AG04449 (cell line): ENCODE measurements at regions of chr13 and their contacts with region 1.

Region 1: DNA sequence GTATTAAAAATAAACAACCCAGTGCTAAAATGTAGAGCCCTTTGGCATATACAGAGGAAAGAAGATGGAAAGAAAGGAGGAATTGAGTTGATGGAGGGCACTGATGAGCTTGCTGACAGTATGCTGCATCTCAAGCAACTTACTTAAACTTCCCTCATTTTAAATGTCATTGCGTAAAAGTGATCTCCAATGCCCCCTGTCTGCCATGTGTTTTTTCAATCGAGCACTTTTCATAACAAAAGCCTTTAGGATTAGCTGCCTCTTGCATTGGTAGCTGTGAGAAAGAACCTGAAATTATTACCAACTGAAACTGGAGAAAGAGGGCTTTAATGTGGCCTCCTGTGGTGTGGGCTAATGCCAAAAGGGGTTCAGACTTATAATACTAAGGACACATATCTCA is 541.6 kb downstream of the SUCLA2 start:
- DNase-seq: no peak
- H3K4me3 ChIP-seq: no peak overlapping the region
- CTCF ChIP-seq: peak; percentile 22

Region 2: GRCh38 chr13:46975173-46975572 is 484.3 kb before region 1 on chr13:
- CTCF ChIA-PET with region 1: interaction called, 24 read pairs
- POLR2A ChIA-PET with region 1: no interaction called
- DNase-seq: no peak
- H3K4me3 ChIP-seq: no peak overlapping the region
- CTCF ChIP-seq: no peak

Region 3: GRCh38 chr13:47437406-47437805 is 22.1 kb before region 1 on chr13:
- CTCF ChIA-PET with region 1: interaction called, 13 read pairs
- POLR2A ChIA-PET with region 1: no interaction called
- DNase-seq: peak; percentile 61
- H3K4me3 ChIP-seq: no peak overlapping the region
- CTCF ChIP-seq: no peak

Region 4: GRCh38 chr13:47480121-47480520 is 20.6 kb after region 1 on chr13:
- CTCF ChIA-PET with region 1: interaction called, 11 read pairs
- POLR2A ChIA-PET with region 1: no interaction called
- DNase-seq: peak; percentile 78
- H3K4me3 ChIP-seq: no peak overlapping the region
- CTCF ChIP-seq: no peak

Region 5: DNA sequence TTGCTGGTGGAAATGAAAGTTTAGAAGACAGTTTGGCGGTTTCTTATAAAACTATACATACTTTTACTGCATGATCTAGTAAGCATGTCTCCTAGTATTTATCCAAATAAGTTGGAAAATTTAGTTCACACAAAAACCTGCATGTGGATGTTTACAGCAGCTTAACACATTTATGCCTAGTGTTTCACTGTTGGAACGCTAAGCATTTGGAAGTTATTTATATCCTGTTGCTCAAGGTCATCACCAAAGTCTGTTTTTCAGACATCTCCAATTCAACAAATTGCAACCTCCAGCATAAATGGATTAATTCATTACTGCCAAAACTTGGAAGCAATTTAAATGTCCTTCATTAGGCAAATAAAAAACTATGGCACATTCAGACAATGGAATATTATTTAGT is 79.8 kb after region 1 on chr13:
- CTCF ChIA-PET with region 1: no interaction called
- POLR2A ChIA-PET with region 1: no interaction called
- DNase-seq: no peak
- H3K4me3 ChIP-seq: no peak overlapping the region
- CTCF ChIP-seq: no peak

Region 6: GRCh38 chr13:47588676-47589075 is 129.2 kb after region 1 on chr13:
- CTCF ChIA-PET with region 1: no interaction called
- POLR2A ChIA-PET with region 1: no interaction called
- DNase-seq: no peak
- H3K4me3 ChIP-seq: no peak overlapping the region
- CTCF ChIP-seq: no peak

Region 7: DNA sequence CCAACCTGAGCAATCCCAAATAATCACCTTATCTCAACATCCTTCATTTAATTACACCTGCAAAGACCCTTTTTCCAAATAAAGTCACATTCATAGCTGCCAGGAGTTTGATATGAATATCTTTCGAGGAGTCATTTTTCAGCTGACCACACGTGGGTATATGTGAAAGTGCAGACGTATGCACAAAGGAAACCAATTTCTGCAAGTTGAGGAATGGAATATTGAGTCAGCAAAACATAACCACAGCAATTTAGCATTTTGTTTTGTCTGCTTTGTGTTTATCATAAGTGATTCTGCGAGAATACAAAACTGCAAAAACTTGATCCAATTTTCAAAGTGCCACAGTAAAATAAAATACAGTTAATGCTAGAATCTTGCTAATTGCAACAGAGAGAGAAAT is 245.7 kb after region 1 on chr13:
- CTCF ChIA-PET with region 1: no interaction called
- POLR2A ChIA-PET with region 1: no interaction called
- DNase-seq: no peak
- H3K4me3 ChIP-seq: no peak overlapping the region
- CTCF ChIP-seq: no peak

Region 8: GRCh38 chr13:47788844-47789243 is 329.3 kb after region 1 on chr13:
- CTCF ChIA-PET with region 1: no interaction called
- POLR2A ChIA-PET with region 1: no interaction called
- DNase-seq: no peak
- H3K4me3 ChIP-seq: no peak overlapping the region
- CTCF ChIP-seq: no peak